CD14-positive monocyte (primary cell): ENCODE measurements at regions of chr20 and their contacts with region 1.

Region 1: GRCh38 chr20:35207950-35208611 is 18.4 kb upstream of the MMP24 start:
- DNase-seq: peak; percentile 58 to 71 (median 66)
- H3K4me3 ChIP-seq: no peak overlapping the region
- H3K4me3 Mint-ChIP-seq: no peak overlapping the region
- H3K27ac ChIP-seq: no peak overlapping the region
- H3K27ac Mint-ChIP-seq: no peak overlapping the region
- H3K4me1 ChIP-seq: no peaks in the 10 kb centered on the region
- H3K4me1 Mint-ChIP-seq: no peaks in the 10 kb centered on the region
- H3K27me3 ChIP-seq: no peaks in the 10 kb centered on the region
- H3K27me3 Mint-ChIP-seq: peaks cover 0 to 4% (median 0%) of the 10 kb centered on the region in 3 donors
- CTCF ChIP-seq: peak; percentile 77

Region 2: GRCh38 chr20:35092524-35093266 is 115.4 kb before region 1 on chr20 and contains the start of gene TRPC4AP:
- intact Hi-C with region 1: loop called (anchors 2 kb)
- DNase-seq: peak; percentile 86 to 89 (median 87)
- H3K4me3 ChIP-seq: peak within 1 kb of the TSS; percentile 90 to 95 (median 92)
- H3K4me3 Mint-ChIP-seq: peak within 1 kb of the TSS; percentile 91 to 94
- H3K27ac ChIP-seq: peak within 1 kb of the TSS; percentile 84 to 90
- H3K27ac Mint-ChIP-seq: peak within 1 kb of the TSS; percentile 94 to 99 (median 97)
- H3K4me1 ChIP-seq: peaks cover 43 to 56% of the 10 kb centered on the region in 2 donors
- H3K4me1 Mint-ChIP-seq: peaks cover 54% of the 10 kb centered on the region
- H3K27me3 ChIP-seq: no peaks in the 10 kb centered on the region
- H3K27me3 Mint-ChIP-seq: peaks cover 0 to 10% (median 1%) of the 10 kb centered on the region in 3 donors
- CTCF ChIP-seq: peak; percentile 98
- polyA plus RNA-seq, gene TRPC4AP: 80.8 to 98.4 (median 88.6) TPM

Region 3: GRCh38 chr20:35318502-35319157 is 110.5 kb after region 1 on chr20:
- intact Hi-C with region 1: no loop called
- DNase-seq: no peak
- H3K4me3 ChIP-seq: no peak overlapping the region
- H3K4me3 Mint-ChIP-seq: no peak overlapping the region
- H3K27ac ChIP-seq: no peak overlapping the region
- H3K27ac Mint-ChIP-seq: no peak overlapping the region
- H3K4me1 ChIP-seq: no peaks in the 10 kb centered on the region
- H3K4me1 Mint-ChIP-seq: peaks cover 9% of the 10 kb centered on the region
- H3K27me3 ChIP-seq: no peaks in the 10 kb centered on the region
- H3K27me3 Mint-ChIP-seq: no peaks in the 10 kb centered on the region
- CTCF ChIP-seq: no peak